ENCODE measurements at regions of chr4 and their contacts with region 1.

Region 1: DNA sequence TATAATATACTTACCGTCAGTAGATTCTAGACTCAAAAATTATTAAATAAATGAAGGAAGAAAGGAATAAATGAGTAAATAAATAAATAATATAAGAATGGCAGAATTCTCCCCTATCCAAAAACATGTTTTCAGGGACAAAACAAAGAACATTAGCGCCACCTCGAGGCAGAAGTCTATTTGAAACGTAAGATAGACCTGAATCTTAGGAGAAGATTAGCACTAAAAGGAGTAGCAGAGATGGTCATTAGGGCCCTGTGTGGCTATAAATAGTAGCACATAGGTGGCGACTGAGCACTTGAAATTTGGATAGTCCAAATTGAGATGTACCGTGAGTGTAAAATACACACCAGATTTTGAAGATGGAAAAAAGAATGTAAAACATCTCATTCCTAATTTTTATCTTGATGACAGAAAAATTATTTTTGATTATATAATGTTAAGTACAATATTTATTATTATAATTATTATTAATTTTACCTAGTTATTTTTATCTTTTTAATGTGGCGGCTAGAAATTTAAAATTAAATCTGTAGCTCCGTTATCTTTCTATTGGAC is 24.3 kb upstream of the SRD5A3 start:
- DNase-seq: peak; percentile 2
- ATAC-seq: peak; percentile 64
- H3K4me3 ChIP-seq: no peak overlapping the region
- H3K27ac ChIP-seq: no peak overlapping the region
- H3K4me1 ChIP-seq: no peaks in the 10 kb centered on the region
- H3K27me3 ChIP-seq: no peaks in the 10 kb centered on the region
- CTCF ChIP-seq: peak; percentile 38 to 45 (median 43); a peak in 4 of 6 replicates
- EP300 ChIP-seq: no peak
- POLR2A ChIP-seq: no peak
- RAD21 ChIP-seq: peak; percentile 76

Region 2: GRCh38 chr4:54683616-54684346 is 638.0 kb before region 1 on chr4:
- CTCF ChIA-PET with region 1: no interaction called
- POLR2A ChIA-PET with region 1: no interaction called
- RAD21 ChIA-PET with region 1: no interaction called
- SMC1A ChIA-PET with region 1: no interaction called
- in situ Hi-C with region 1: no loop called
- intact Hi-C with region 1: loop called (anchors 10 kb)
- DNase-seq: no peak
- ATAC-seq: peak; percentile 76
- H3K4me3 ChIP-seq: no peak overlapping the region
- H3K27ac ChIP-seq: no peak overlapping the region
- H3K4me1 ChIP-seq: peaks cover 2% of the 10 kb centered on the region; the same call in 1 of the 2 replicates
- H3K27me3 ChIP-seq: no peaks in the 10 kb centered on the region
- CTCF ChIP-seq: peak; percentile 52 to 61 (median 60); a peak in 5 of 6 replicates
- EP300 ChIP-seq: no peak
- POLR2A ChIP-seq: no peak
- RAD21 ChIP-seq: peak; percentile 64

Region 3: GRCh38 chr4:54961357-54961975 is 360.3 kb before region 1 on chr4:
- CTCF ChIA-PET with region 1: no interaction called
- POLR2A ChIA-PET with region 1: no interaction called
- RAD21 ChIA-PET with region 1: no interaction called
- SMC1A ChIA-PET with region 1: no interaction called
- in situ Hi-C with region 1: loop called (anchors 10 kb)
- intact Hi-C with region 1: no loop called
- DNase-seq: no peak
- ATAC-seq: peak; percentile 49
- H3K4me3 ChIP-seq: no peak overlapping the region
- H3K27ac ChIP-seq: no peak overlapping the region
- H3K4me1 ChIP-seq: no peaks in the 10 kb centered on the region
- H3K27me3 ChIP-seq: no peaks in the 10 kb centered on the region
- CTCF ChIP-seq: peak in 2 of 3 experiments; percentile 46; a peak in 4 of 6 replicates
- EP300 ChIP-seq: no peak
- POLR2A ChIP-seq: no peak
- RAD21 ChIP-seq: peak; percentile 53

Region 4: DNA sequence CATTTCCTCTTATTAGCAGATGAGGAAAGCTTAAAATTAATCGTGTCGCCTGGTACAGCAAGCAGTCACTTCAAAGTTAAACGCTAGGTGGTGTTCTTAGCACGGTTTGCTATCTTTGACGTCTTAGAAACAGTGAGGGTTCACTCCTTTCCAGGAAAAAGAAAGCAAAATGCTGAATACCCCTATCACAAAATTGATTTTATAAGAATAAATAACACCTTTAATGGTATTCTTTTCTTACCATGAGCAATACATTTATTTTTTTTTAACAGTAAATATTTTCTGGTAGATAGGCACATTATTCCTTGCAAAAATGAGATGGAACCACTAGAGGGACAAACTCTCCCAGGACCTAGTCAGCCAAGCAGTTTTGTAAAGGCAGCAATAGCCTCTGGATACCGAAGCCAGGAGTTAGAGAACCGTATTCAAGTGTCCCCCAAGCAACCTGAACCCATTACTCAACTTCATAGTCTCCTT is 350.3 kb before region 1 on chr4:
- CTCF ChIA-PET with region 1: interaction called, 13 read pairs
- POLR2A ChIA-PET with region 1: no interaction called
- RAD21 ChIA-PET with region 1: no interaction called
- SMC1A ChIA-PET with region 1: interaction called, 7 read pairs
- in situ Hi-C with region 1: loop called (anchors 10 kb)
- intact Hi-C with region 1: loop called (anchors 5 kb)
- DNase-seq: no peak
- ATAC-seq: peak; percentile 85
- H3K4me3 ChIP-seq: no peak overlapping the region
- H3K27ac ChIP-seq: no peak overlapping the region
- H3K4me1 ChIP-seq: no peaks in the 10 kb centered on the region
- H3K27me3 ChIP-seq: no peaks in the 10 kb centered on the region
- CTCF ChIP-seq: peak; percentile 23 to 50 (median 49); a peak in 5 of 6 replicates
- EP300 ChIP-seq: no peak
- POLR2A ChIP-seq: no peak
- RAD21 ChIP-seq: peak; percentile 56

Region 5: DNA sequence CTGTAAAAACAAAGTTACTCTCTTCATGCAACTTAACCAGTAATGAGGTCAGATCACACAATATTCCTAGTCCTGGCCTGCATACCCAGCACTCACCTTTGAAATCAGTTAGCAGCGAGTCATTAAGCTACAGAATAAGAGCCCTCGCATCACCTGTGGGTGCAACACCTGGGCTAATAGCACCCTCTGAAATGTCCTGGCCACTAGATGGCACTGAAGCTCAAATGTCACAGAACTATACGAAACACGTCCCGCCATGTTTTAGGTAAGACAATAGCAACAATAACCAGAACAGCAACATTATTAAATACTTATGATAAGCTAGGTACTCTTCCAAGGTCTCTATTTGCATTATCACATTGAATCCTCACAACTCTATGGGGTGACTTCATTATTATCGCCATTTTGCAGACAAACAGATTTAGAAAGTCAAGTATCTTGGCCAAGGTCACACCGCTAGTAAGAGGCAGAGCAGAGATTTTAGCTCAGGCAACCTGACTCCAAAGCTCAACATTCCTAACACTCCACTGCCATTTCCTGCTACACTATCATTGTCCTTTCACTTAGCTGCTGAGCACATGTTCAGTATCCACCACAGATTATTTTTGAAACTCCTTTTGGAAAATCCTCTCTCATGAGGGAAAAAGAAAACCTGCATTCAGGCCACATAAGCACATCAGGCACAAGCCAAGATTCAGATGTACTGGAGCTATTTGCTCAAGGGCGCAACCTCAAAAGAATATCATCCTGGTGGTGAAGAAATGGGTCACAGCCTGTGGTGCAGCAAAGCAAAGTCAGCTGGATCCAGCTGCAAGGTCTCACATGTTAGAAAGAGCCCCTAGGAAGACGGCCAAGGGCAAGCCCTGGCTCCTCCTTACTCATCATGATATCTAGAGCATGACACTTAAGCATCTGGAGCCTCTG is 136.9 kb before region 1 on chr4:
- CTCF ChIA-PET with region 1: interaction called, 9 read pairs
- POLR2A ChIA-PET with region 1: no interaction called
- RAD21 ChIA-PET with region 1: no interaction called
- SMC1A ChIA-PET with region 1: no interaction called
- in situ Hi-C with region 1: no loop called
- intact Hi-C with region 1: loop called (anchors 10 kb)
- DNase-seq: no peak
- ATAC-seq: peak; percentile 67
- H3K4me3 ChIP-seq: no peak overlapping the region
- H3K27ac ChIP-seq: no peak overlapping the region
- H3K4me1 ChIP-seq: no peaks in the 10 kb centered on the region
- H3K27me3 ChIP-seq: no peaks in the 10 kb centered on the region
- CTCF ChIP-seq: peak; percentile 40 to 57 (median 43)
- EP300 ChIP-seq: no peak
- POLR2A ChIP-seq: no peak
- RAD21 ChIP-seq: peak; percentile 51

Region 6: DNA sequence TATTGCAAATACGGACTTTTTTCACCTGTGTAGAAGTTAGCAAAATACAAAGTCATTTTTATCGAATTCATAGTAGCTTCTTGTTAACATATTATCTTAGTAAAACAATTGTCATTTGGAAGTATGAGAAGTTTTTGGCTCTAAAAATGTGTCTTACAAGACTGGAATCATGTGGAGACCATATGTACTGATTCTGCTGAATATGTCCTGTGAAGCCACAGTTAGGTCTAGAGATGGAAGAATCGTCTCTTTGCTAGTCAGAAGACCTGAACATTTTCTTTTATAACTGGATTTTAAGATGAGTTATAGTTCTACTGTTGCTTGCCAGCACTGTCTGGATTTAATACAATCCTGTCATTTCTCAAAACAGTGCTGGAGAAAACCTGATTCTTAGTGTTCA is 103.0 kb after region 1 on chr4:
- CTCF ChIA-PET with region 1: no interaction called
- POLR2A ChIA-PET with region 1: no interaction called
- RAD21 ChIA-PET with region 1: no interaction called
- SMC1A ChIA-PET with region 1: no interaction called
- in situ Hi-C with region 1: no loop called
- intact Hi-C with region 1: no loop called
- DNase-seq: no peak
- ATAC-seq: no peak
- H3K4me3 ChIP-seq: no peak overlapping the region
- H3K27ac ChIP-seq: no peak overlapping the region
- H3K4me1 ChIP-seq: no peaks in the 10 kb centered on the region
- H3K27me3 ChIP-seq: no peaks in the 10 kb centered on the region
- CTCF ChIP-seq: no peak
- EP300 ChIP-seq: no peak
- POLR2A ChIP-seq: no peak
- RAD21 ChIP-seq: no peak

Region 7: DNA sequence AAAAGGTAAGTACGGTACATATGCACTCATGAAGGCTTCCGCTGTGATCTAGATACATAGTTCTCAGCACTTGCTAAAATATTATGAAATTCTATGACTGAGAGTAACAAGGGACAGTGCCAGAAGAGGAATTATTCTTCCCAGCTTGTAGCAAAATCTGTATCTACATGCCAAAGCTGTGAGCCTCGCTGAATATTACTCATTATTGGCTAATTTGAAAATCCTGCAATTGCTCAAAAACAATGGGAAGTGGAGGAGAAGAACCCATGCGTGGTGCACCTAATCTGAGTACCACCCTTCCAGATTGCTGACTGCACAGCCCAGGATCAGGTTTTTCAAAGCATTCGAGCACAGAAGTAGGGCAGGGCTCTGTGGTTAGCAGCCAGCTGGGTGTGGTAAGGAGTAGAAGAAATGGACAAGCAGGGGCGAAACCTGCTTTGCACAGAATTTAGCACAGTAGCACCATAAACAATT is 287.6 kb after region 1 on chr4:
- CTCF ChIA-PET with region 1: no interaction called
- POLR2A ChIA-PET with region 1: no interaction called
- RAD21 ChIA-PET with region 1: no interaction called
- SMC1A ChIA-PET with region 1: no interaction called
- in situ Hi-C with region 1: no loop called
- intact Hi-C with region 1: no loop called
- DNase-seq: no peak
- ATAC-seq: no peak; the same call in 2 of the 3 replicates
- H3K4me3 ChIP-seq: no peak overlapping the region
- H3K27ac ChIP-seq: no peak overlapping the region
- H3K4me1 ChIP-seq: no peaks in the 10 kb centered on the region
- H3K27me3 ChIP-seq: no peaks in the 10 kb centered on the region
- CTCF ChIP-seq: no peak
- EP300 ChIP-seq: no peak
- POLR2A ChIP-seq: no peak
- RAD21 ChIP-seq: no peak

Measured in GM12878 (cell line).